ENCODE measurements at regions of chr7 and their contacts with region 1.

Region 1: GRCh38 chr7:116929914-116930913 is 23.1 kb upstream of the ST7 start:
- DNase-seq: peak; percentile 91
- ATAC-seq: peak; percentile 92
- H3K4me3 Mint-ChIP-seq: no peak overlapping the region
- H3K27ac Mint-ChIP-seq: no peak overlapping the region
- H3K4me1 Mint-ChIP-seq: peaks cover 16% of the 10 kb centered on the region
- H3K27me3 Mint-ChIP-seq: peaks cover 7% of the 10 kb centered on the region
- CTCF ChIP-seq: peak; percentile 92

Region 2: GRCh38 chr7:116942504-116942903 is 12.3 kb after region 1 on chr7:
- CTCF ChIA-PET with region 1: interaction called, 11 read pairs
- POLR2A ChIA-PET with region 1: no interaction called
- DNase-seq: no peak
- ATAC-seq: no peak
- H3K4me3 Mint-ChIP-seq: no peak overlapping the region
- H3K27ac Mint-ChIP-seq: no peak overlapping the region
- H3K4me1 Mint-ChIP-seq: 0 out of 2 replicates have a peak, but pooled peaks cover 3% of the 10 kb centered on the region
- H3K27me3 Mint-ChIP-seq: no peaks in the 10 kb centered on the region
- CTCF ChIP-seq: no peak

Region 3: DNA sequence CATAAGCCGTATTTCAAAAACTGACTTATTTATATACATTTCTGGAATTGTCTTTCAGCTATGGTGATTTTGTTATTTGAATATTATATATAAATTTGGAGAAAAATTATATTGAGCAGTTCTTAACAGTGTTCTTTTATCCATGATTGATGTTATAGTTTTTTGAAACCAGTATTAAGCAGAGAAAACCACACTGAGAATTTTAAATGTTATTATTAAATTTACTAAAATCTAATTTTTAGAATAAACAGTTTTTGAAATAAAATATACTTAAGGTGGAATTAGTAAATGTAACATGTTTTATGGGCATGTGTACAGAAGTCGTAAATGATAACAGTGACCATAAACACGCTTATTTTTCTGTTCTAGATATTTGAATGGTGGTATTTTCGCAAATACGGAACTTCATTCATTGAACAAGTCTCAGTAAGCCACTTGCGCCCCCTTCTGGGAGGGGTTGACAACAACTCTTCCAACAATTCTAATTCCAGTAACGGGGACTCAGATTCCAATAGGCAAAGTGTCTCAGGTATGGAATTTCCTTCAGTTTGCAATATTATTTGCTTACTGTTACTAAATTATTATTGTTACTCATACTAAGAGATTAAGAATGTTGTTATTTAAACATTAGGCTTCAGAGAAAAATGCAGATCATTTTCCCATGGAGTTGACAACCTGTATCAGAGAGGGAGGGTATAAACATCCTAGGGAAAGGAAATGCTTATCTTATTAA is 189.1 kb after region 1 on chr7:
- CTCF ChIA-PET with region 1: interaction called, 36 read pairs
- POLR2A ChIA-PET with region 1: no interaction called
- DNase-seq: peak; percentile 85
- ATAC-seq: no peak
- H3K4me3 Mint-ChIP-seq: no peak overlapping the region
- H3K27ac Mint-ChIP-seq: no peak overlapping the region
- H3K4me1 Mint-ChIP-seq: peaks cover 30% of the 10 kb centered on the region
- H3K27me3 Mint-ChIP-seq: no peaks in the 10 kb centered on the region
- CTCF ChIP-seq: peak; percentile 70

Region 4: DNA sequence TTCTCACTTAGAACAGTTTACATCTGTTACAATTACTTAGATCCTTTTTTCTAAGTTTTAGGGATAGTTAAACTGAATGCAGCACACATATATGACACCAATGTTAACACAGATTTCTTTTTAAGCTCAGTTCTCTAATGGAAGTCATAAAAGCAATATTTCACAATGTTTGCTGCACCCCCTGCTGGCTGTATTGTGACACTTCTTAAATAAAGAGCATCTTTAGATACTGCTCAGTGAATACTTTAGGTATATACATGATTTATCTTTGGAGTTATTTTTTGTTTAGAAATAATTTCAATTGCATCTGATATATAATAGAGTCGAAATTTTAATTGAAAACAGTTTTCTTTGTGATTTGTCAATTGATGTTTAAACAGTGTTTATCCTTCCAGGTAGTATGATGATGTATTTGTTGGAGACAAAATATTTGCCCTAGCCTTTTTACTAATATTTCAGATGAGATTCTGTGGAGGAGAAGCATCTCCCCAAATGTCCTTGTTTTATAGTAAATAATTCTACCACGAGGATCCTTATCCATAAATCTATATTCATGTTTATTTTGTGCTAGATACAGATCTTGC is 197.5 kb after region 1 on chr7:
- CTCF ChIA-PET with region 1: interaction called, 36 read pairs
- POLR2A ChIA-PET with region 1: no interaction called
- DNase-seq: peak; percentile 15
- ATAC-seq: no peak
- H3K4me3 Mint-ChIP-seq: no peak overlapping the region
- H3K27ac Mint-ChIP-seq: no peak overlapping the region
- H3K4me1 Mint-ChIP-seq: peaks cover 23% of the 10 kb centered on the region
- H3K27me3 Mint-ChIP-seq: no peaks in the 10 kb centered on the region
- CTCF ChIP-seq: peak; percentile 45; the same call in 1 of the 2 replicates